MCF 10A (cell line): ENCODE measurements at regions of chr9 and their contacts with region 1.

Region 1: DNA sequence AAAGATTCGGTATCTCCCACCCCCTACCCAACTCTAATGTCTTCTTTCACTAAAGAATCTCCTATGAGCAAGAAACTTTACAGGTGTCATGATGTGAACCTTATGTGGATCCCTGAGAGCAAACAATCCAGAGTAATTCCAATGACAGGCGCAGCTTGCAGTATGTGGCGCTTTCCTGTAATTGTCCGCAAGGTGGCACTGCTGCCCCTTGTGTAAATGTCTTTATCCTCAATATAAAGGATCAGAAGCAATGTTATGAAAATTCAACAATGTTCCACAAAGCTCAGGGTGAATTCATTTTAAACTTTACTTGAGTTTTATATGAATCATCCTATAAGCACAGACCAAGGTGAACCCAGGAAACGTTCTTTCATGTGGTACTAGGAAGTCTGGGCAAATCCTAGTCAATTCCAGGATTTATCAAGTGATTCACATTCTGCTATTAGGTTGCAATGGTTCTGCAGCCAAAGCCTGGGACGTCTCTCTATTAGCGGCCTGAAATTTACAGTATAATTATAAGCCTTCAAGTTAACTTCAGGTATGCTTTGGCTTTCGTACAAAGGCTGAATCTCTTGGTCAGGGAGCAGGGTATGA is 113.7 kb downstream of the TRPM6 start:
- DNase-seq: peak; percentile 85
- H3K4me3 Mint-ChIP-seq: no peak overlapping the region
- H3K27ac Mint-ChIP-seq: no peak overlapping the region
- H3K4me1 Mint-ChIP-seq: no peaks in the 10 kb centered on the region
- H3K27me3 Mint-ChIP-seq: peaks cover 3% of the 10 kb centered on the region
- CTCF ChIP-seq: peak; percentile 76

Region 2: GRCh38 chr9:74729136-74729695 is 44.8 kb before region 1 on chr9:
- CTCF ChIA-PET with region 1: no interaction called
- POLR2A ChIA-PET with region 1: no interaction called
- intact Hi-C with region 1: no loop called
- DNase-seq: no peak
- H3K4me3 Mint-ChIP-seq: no peak overlapping the region
- H3K27ac Mint-ChIP-seq: no peak overlapping the region
- H3K4me1 Mint-ChIP-seq: no peaks in the 10 kb centered on the region
- H3K27me3 Mint-ChIP-seq: peaks cover 50% of the 10 kb centered on the region
- CTCF ChIP-seq: no peak

Region 3: GRCh38 chr9:74760031-74760698 is 13.8 kb before region 1 on chr9:
- CTCF ChIA-PET with region 1: interaction called, 13 read pairs
- POLR2A ChIA-PET with region 1: no interaction called
- intact Hi-C with region 1: no loop called
- DNase-seq: peak; percentile 92
- H3K4me3 Mint-ChIP-seq: no peak overlapping the region
- H3K27ac Mint-ChIP-seq: peak overlapping the region; percentile 69
- H3K4me1 Mint-ChIP-seq: peaks cover 12% of the 10 kb centered on the region
- H3K27me3 Mint-ChIP-seq: no peaks in the 10 kb centered on the region
- CTCF ChIP-seq: no peak

Region 4: DNA sequence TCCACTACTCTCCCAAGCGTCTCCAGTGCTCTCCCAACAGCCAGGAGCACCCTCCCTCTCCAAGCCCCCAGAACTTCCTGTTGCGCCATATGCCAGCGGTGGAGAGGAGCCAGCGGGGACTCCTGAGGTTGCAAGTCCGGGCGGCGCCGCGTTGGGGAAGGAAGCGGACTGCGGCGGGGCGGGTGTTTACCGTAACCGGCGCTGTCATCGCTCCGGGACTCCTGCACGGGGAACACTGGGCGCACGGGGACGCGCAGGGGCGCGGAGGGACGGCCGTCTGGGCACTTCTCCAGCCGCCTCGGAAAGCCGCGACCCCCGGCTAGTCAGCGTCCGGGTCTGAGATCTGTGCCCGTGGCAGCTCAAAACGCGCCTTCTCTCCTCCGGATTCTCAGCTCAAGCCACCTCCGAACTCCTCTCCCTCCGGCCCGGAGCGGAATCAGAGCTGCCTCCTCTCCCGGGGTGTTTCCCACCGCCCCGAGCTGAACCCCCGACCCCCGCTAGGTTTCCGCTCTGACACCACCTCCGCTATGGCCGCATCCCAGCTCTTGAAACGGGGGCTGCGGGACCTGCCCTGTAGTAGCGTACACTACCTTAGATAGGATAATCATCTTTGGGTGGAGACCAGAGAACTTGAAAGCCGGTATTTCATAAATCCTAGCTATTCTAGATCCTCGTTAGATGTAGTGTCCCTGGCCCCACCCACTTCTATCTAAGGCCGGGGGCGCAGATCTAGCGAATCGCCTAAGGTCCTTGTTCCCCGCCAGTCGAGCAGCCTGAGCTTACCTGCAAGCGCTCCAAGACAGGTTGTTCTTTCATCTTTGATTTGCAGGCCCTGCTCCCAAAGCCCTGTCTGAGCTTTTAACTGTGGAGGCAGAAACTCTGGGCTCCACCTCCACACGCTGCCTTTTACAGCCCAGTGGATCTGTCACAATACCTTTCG is 113.3 kb after region 1 on chr9 and contains the start of gene TRPM6:
- CTCF ChIA-PET with region 1: interaction called, 11 read pairs
- POLR2A ChIA-PET with region 1: no interaction called
- intact Hi-C with region 1: no loop called
- DNase-seq: peak; percentile 87
- H3K4me3 Mint-ChIP-seq: peak within 1 kb of the TSS; percentile 84
- H3K27ac Mint-ChIP-seq: peak within 1 kb of the TSS; percentile 58
- H3K4me1 Mint-ChIP-seq: peaks cover 9% of the 10 kb centered on the region
- H3K27me3 Mint-ChIP-seq: no peaks in the 10 kb centered on the region
- CTCF ChIP-seq: no peak
- total RNA-seq, gene TRPM6: 0.22 TPM in 1 of 2 replicates, not detected in the other

Region 5: DNA sequence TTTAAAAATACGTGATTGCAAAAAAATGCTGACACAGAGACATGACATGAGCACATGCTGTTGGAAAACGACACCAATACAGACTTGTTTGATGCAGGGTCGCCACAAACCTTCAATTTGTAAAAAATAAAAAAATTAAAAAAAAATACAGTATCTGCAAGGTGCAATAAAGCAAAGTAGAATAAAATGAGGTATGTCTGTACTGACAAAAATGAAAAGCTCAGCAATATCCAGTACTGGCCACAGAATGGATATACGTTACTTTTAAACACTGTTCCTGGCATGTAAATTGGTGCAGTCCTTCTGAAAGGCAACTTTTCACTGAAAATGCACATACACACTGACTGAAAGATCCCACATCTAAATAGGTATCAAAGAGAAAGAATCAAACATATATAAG is 205.9 kb after region 1 on chr9:
- CTCF ChIA-PET with region 1: interaction called, 14 read pairs
- POLR2A ChIA-PET with region 1: interaction called, 3 read pairs
- intact Hi-C with region 1: no loop called
- DNase-seq: no peak
- H3K4me3 Mint-ChIP-seq: no peak overlapping the region
- H3K27ac Mint-ChIP-seq: no peak overlapping the region
- H3K4me1 Mint-ChIP-seq: no peaks in the 10 kb centered on the region
- H3K27me3 Mint-ChIP-seq: no peaks in the 10 kb centered on the region
- CTCF ChIP-seq: no peak

Region 6: DNA sequence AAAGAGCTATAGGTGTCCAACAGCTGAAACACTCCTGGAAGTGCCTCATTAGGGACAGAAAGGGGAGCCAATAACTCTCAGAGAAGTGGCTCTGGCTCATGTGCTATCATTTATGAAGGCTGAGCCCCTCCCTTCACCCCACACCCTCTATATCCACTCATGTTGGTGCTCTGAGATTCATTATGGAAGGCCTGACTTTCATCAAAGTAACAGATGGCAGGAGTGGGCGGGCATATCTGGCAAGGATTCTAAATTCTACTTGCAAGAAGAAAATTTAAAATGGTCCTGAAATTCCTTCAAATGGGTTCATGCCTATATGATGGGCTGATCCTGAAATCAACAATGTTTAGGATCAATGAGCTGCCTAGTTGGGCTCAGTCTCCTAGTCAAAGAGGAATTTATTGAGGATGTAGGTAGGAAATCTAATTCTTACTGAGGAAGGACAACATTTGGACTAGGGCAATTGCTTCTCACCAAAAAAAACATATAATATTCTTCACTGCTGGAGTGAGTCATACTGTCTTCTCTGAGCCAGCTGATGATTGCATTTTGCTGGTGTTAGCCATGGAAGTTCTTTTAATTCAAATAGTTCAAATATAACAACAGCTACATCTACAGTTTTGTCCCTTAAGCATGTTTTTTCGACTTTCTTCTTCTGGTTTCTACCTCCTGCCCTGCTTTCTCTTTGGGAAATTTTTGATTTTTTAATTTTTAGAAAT is 290.5 kb after region 1 on chr9:
- CTCF ChIA-PET with region 1: interaction called, 50 read pairs
- POLR2A ChIA-PET with region 1: no interaction called
- intact Hi-C with region 1: no loop called
- DNase-seq: no peak
- H3K4me3 Mint-ChIP-seq: no peak overlapping the region
- H3K27ac Mint-ChIP-seq: peak overlapping the region; percentile 49
- H3K4me1 Mint-ChIP-seq: no peaks in the 10 kb centered on the region
- H3K27me3 Mint-ChIP-seq: no peaks in the 10 kb centered on the region
- CTCF ChIP-seq: no peak

Region 7: GRCh38 chr9:75088260-75088905 is 314.4 kb after region 1 on chr9 and contains the start of gene OSTF1:
- CTCF ChIA-PET with region 1: interaction called, 53 read pairs
- POLR2A ChIA-PET with region 1: interaction called, 4 read pairs
- intact Hi-C with region 1: no loop called
- DNase-seq: peak; percentile 95
- H3K4me3 Mint-ChIP-seq: peak within 1 kb of the TSS; percentile 99
- H3K27ac Mint-ChIP-seq: peak within 1 kb of the TSS; percentile 97
- H3K4me1 Mint-ChIP-seq: peaks cover 25% of the 10 kb centered on the region
- H3K27me3 Mint-ChIP-seq: no peaks in the 10 kb centered on the region
- CTCF ChIP-seq: no peak
- total RNA-seq, gene OSTF1: 18.3 and 21.1 TPM in 2 replicates

Region 8: GRCh38 chr9:76302947-76303940 is 1529.3 kb after region 1 on chr9:
- CTCF ChIA-PET with region 1: interaction called, 3 read pairs
- POLR2A ChIA-PET with region 1: interaction called, 3 read pairs
- intact Hi-C with region 1: loop called (anchors 5 kb)
- DNase-seq: peak; percentile 56
- H3K4me3 Mint-ChIP-seq: no peak overlapping the region
- H3K27ac Mint-ChIP-seq: no peak overlapping the region
- H3K4me1 Mint-ChIP-seq: no peaks in the 10 kb centered on the region
- H3K27me3 Mint-ChIP-seq: no peaks in the 10 kb centered on the region
- CTCF ChIP-seq: peak; percentile 59